RWPE1 (cell line): ENCODE measurements at regions of chr9 and their contacts with region 1.

Region 1: GRCh38 chr9:37852222-37852621 is 51.6 kb downstream of the DCAF10 start:
- DNase-seq: no peak
- H3K27ac ChIP-seq: no peak overlapping the region
- CTCF ChIP-seq: no peak

Region 2: GRCh38 chr9:37839496-37840461 is 12.4 kb before region 1 on chr9:
- CTCF ChIA-PET with region 1: no interaction called
- POLR2A ChIA-PET with region 1: interaction called, 10 read pairs
- DNase-seq: no peak
- H3K27ac ChIP-seq: no peak overlapping the region
- CTCF ChIP-seq: no peak